ENCODE measurements at regions of chr1 and their contacts with region 1.

Region 1: DNA sequence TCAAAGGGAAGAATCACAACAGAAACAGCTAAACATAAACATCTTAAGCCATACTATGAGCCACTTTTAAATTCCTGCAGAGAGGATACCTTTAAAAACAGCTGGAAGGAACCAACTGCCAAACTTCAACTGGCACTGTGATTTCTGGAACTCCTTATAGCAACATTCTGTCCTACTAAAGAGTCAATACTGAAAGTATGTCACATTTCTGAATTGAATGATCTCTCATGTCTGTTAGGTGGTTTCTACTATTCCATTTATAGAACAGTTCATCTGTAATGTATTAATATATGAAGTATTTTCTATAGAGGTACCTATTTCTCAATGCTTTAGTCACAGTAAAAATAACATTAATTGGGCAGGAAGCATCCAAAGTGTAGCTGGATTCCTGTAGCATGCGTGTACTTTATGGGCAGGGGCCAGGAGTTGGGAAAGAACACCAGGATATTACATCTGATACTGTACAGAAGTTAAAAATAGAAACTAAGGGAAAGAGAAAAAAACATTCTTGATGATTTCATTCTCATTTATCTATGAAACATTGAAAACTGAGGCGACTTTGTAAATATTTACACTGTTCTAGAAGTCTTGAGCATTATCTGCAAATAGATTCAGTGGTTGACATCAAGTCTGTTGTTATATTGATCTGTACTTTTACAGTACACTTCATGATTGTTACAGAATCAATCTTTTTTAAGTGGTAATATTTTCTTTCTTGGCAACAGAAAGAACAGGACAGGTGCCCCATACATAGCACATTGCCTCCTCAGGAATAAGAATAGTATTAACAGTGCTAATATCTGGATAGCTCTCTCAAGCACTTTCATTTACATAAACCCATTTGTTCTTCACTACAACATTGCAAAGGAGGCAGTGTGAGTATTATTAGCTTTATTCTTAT is 6.1 kb upstream of the ZNF281 start:
- DNase-seq: no peak
- ATAC-seq: peak; percentile 87
- H3K4me3 ChIP-seq: peak overlapping the region; percentile 45
- H3K27ac ChIP-seq: peak overlapping the region; percentile 80
- H3K4me1 ChIP-seq: peaks cover 13% of the 10 kb centered on the region; the same call in 1 of the 2 replicates
- H3K27me3 ChIP-seq: no peaks in the 10 kb centered on the region
- CTCF ChIP-seq: no peak
- EP300 ChIP-seq: peak in 1 of 2 experiments; percentile 72; a peak in 2 of 4 replicates
- POLR2A ChIP-seq: no peak
- RAD21 ChIP-seq: no peak

Region 2: DNA sequence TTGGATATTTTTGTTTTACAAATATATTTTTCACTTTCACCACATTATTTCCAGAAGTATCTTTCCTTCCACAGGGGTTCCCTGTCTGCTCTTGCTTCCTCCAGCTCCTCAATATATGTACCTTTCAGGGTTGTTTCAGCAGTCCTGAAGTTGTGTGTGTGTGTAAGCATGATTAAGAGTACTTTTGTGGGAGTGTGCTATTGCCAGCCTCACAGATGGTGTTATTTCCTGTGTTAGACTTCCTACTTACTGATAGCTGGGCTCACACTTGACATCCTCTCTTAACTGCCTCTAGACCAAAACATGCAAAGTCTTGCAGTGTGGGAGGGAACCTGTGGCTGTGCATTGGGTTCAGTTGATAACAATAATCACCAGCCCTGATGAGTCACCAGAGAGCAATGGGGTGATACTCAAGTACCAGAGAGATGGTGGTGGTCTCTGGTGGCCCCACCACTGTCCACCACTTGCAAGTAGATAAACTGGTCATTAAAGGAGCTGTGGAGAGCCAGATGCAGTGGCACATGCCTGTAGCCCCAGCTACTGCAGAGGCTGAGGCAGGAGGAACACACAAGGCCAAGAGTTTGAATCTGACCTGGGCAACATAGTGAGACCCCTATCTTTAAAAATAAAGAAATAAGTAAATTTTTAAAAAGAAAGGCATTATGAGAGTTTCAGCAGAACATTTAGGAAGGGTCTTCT is 261.7 kb before region 1 on chr1:
- CTCF ChIA-PET with region 1: no interaction called
- POLR2A ChIA-PET with region 1: no interaction called
- RAD21 ChIA-PET with region 1: no interaction called
- SMC1A ChIA-PET with region 1: no interaction called
- in situ Hi-C with region 1: no loop called
- intact Hi-C with region 1: loop called (anchors 5 kb)
- DNase-seq: peak; percentile 88
- ATAC-seq: peak; percentile 89
- H3K4me3 ChIP-seq: no peak overlapping the region
- H3K27ac ChIP-seq: peak overlapping the region; percentile 77
- H3K4me1 ChIP-seq: peaks cover 41% of the 10 kb centered on the region
- H3K27me3 ChIP-seq: no peaks in the 10 kb centered on the region
- CTCF ChIP-seq: no peak
- EP300 ChIP-seq: peak; percentile 83 to 86
- POLR2A ChIP-seq: no peak
- RAD21 ChIP-seq: 0 out of 2 replicates have a peak, but pooled peaks have one; percentile 13

Region 3: DNA sequence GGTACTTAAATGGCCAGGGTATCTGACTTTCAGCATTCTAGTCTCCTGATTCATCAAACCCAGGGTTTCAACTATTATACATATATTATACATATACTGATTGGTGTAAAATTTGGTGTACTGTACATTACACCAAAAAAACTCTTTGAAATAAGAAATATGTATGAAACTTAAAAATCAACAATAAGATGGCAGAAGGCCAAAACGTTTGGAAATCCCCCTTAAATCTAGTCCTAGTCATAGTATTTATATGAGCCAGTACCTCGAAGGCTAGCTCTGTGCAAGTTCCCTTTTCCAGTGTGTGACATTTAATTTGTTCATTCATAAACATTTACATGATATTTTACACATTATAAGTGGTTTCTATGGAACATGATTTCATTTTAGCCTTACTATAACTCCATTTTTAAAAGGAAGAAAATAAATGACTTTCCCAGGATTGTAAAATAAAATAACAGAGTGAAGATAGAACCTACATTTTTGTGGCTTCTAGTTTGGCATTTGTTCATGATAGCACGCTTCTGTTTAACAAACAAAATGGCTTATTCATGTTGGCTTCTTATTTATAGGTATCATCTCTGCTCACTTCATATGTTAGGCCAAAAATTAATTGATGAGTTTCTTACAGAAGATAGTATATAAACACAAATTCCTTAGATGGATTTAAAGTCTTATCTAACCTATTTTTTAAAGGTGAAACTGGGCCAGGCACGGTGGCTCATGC is 12.7 kb after region 1 on chr1:
- CTCF ChIA-PET with region 1: interaction called, 6 read pairs
- POLR2A ChIA-PET with region 1: interaction called, 3 read pairs
- RAD21 ChIA-PET with region 1: interaction called, 5 read pairs
- SMC1A ChIA-PET with region 1: interaction called, 12 read pairs
- in situ Hi-C with region 1: no loop called
- intact Hi-C with region 1: no loop called
- DNase-seq: no peak
- ATAC-seq: peak; percentile 91
- H3K4me3 ChIP-seq: no peak overlapping the region
- H3K27ac ChIP-seq: no peak overlapping the region
- H3K4me1 ChIP-seq: no peaks in the 10 kb centered on the region
- H3K27me3 ChIP-seq: no peaks in the 10 kb centered on the region
- CTCF ChIP-seq: no peak
- EP300 ChIP-seq: no peak
- POLR2A ChIP-seq: no peak
- RAD21 ChIP-seq: no peak

Region 4: GRCh38 chr1:200437556-200438203 is 21.7 kb after region 1 on chr1:
- CTCF ChIA-PET with region 1: interaction called, 3 read pairs
- POLR2A ChIA-PET with region 1: no interaction called
- RAD21 ChIA-PET with region 1: interaction called, 8 read pairs
- SMC1A ChIA-PET with region 1: interaction called, 11 read pairs
- in situ Hi-C with region 1: no loop called
- intact Hi-C with region 1: no loop called
- DNase-seq: no peak
- ATAC-seq: peak; percentile 91
- H3K4me3 ChIP-seq: no peak overlapping the region
- H3K27ac ChIP-seq: peak overlapping the region; percentile 35
- H3K4me1 ChIP-seq: peaks cover 6% of the 10 kb centered on the region; the same call in 1 of the 2 replicates
- H3K27me3 ChIP-seq: no peaks in the 10 kb centered on the region
- CTCF ChIP-seq: no peak
- EP300 ChIP-seq: no peak
- POLR2A ChIP-seq: no peak
- RAD21 ChIP-seq: no peak

Region 5: GRCh38 chr1:200448034-200448762 is 32.3 kb after region 1 on chr1:
- CTCF ChIA-PET with region 1: interaction called, 3 read pairs
- POLR2A ChIA-PET with region 1: interaction called, 3 read pairs
- RAD21 ChIA-PET with region 1: no interaction called
- SMC1A ChIA-PET with region 1: interaction called, 3 read pairs
- in situ Hi-C with region 1: no loop called
- intact Hi-C with region 1: loop called (anchors 2 kb)
- DNase-seq: peak; percentile 81
- ATAC-seq: peak; percentile 91
- H3K4me3 ChIP-seq: no peak overlapping the region; the same call in 1 of the 2 replicates
- H3K27ac ChIP-seq: peak overlapping the region; percentile 92
- H3K4me1 ChIP-seq: peaks cover 16% of the 10 kb centered on the region; the same call in 1 of the 2 replicates
- H3K27me3 ChIP-seq: no peaks in the 10 kb centered on the region
- CTCF ChIP-seq: no peak
- EP300 ChIP-seq: peak; percentile 94 to 97
- POLR2A ChIP-seq: no peak
- RAD21 ChIP-seq: peak; percentile 4; the same call in 1 of the 2 replicates

Region 6: GRCh38 chr1:200473698-200474371 is 57.9 kb after region 1 on chr1:
- CTCF ChIA-PET with region 1: interaction called, 7 read pairs
- POLR2A ChIA-PET with region 1: interaction called, 13 read pairs
- RAD21 ChIA-PET with region 1: interaction called, 13 read pairs
- SMC1A ChIA-PET with region 1: interaction called, 59 read pairs
- in situ Hi-C with region 1: no loop called
- intact Hi-C with region 1: loop called (anchors 2 kb)
- DNase-seq: peak; percentile 57
- ATAC-seq: peak; percentile 69
- H3K4me3 ChIP-seq: peak overlapping the region; percentile 43
- H3K27ac ChIP-seq: peak overlapping the region; percentile 78
- H3K4me1 ChIP-seq: peaks cover 36% of the 10 kb centered on the region
- H3K27me3 ChIP-seq: no peaks in the 10 kb centered on the region
- CTCF ChIP-seq: no peak
- EP300 ChIP-seq: peak in 1 of 2 experiments; percentile 29; a peak in 1 of 4 replicates
- POLR2A ChIP-seq: peak; percentile 28; the same call in 1 of the 2 replicates
- RAD21 ChIP-seq: no peak

Region 7: DNA sequence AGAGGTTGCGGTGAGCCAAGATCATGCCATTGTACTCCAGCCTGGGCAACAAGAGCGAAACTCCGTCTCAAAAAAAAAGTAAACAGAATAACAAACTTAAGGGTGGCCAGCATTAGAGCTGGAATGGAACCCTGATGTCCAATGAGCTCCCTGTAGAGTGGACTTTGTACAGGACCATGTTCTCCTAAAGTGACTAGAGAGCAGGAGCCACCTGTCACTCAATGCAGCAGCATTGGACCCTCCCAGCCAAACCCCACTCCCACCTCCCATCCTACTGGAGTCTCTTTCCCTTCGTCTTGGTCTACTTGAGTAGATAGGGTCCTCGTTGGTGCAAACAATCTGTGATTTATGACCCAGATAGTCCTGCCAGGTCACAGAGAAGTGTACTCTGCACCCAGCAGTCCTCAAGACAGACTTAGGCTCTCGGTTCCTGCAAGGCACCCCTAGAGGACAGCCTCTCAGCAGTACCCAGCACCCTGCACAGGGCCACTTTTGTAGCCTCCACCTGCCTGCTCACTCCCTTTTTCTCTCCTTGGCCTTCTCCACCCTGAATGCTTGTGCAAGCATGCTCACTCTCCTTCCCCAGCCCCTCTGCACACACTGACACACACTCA is 63.1 kb after region 1 on chr1:
- CTCF ChIA-PET with region 1: interaction called, 7 read pairs
- POLR2A ChIA-PET with region 1: interaction called, 13 read pairs
- RAD21 ChIA-PET with region 1: interaction called, 13 read pairs
- SMC1A ChIA-PET with region 1: interaction called, 59 read pairs
- in situ Hi-C with region 1: no loop called
- intact Hi-C with region 1: loop called (anchors 2 kb)
- DNase-seq: no peak
- ATAC-seq: no peak
- H3K4me3 ChIP-seq: no peak overlapping the region
- H3K27ac ChIP-seq: no peak overlapping the region
- H3K4me1 ChIP-seq: peaks cover 24% of the 10 kb centered on the region
- H3K27me3 ChIP-seq: no peaks in the 10 kb centered on the region
- CTCF ChIP-seq: no peak
- EP300 ChIP-seq: no peak
- POLR2A ChIP-seq: no peak
- RAD21 ChIP-seq: no peak

Measured in GM12878 (cell line).